ENCODE measurements at regions of chr9 and their contacts with region 1.

Region 1: DNA sequence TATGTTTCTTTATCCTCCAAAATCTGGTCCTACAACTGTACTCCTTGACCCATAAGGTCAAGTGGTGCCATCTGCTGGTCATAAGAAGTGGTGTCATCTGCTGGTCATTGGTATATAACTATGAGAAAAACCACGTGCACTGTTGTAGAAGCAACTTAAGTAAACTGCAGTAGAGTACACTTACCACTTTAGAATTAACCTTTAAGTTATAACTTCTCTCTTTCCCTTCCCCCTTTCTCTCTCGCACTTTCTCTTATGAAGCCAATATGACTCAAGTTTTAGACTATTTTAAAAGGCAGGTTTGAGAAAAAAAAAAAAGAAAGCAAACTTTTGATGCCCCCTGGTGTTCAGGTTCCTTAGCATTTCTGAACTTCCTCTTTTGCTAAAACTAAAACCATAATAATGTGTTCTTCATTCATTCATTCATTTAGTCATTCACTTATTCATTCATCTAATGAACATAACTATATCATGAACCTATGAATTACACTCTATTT is 12.8 kb upstream of the MTAP start:
- DNase-seq: peak; percentile 66 to 67
- H3K4me3 ChIP-seq: peak overlapping the region; percentile 12; the same call in 1 of the 2 replicates
- H3K4me3 Mint-ChIP-seq: peak overlapping the region; percentile 61
- H3K27ac Mint-ChIP-seq: no peak overlapping the region
- H3K4me1 ChIP-seq: peaks cover 18% of the 10 kb centered on the region
- H3K4me1 Mint-ChIP-seq: peaks cover 14% of the 10 kb centered on the region
- H3K27me3 ChIP-seq: no peaks in the 10 kb centered on the region
- H3K27me3 Mint-ChIP-seq: no peaks in the 10 kb centered on the region
- CTCF ChIP-seq: peak; percentile 50 to 59

Region 2: DNA sequence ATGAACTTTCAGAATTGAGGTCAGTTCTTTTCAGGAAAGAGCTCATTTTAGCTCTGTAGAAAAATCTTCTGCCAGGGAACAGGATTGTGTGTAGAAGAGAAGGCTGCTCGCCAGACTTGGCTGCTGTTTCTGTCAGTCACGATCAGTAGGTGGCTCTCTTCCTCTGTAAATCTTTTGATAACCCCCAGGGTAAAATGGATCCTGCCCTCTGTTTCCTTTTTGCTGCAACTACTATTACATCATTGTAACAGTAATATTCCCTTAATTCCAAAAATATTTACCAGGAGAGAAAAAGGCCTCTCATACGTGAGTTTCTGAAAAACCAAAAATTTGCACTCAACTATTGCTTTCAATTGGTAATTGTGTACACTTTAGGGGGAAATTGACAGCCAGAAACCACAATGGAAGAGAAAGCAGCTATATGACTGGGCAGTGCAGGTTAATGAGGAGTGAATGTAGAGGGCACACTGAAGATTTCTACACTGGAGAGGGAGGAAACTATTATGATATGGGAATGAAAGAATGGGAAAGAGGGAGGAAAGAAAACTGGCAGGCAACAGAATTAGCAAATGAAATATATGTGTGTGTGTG is 635.5 kb before region 1 on chr9:
- CTCF ChIA-PET with region 1: no interaction called
- POLR2A ChIA-PET with region 1: no interaction called
- intact Hi-C with region 1: loop called (anchors 1 kb)
- DNase-seq: peak in 1 of 2 experiments; percentile 15
- H3K4me3 ChIP-seq: no peak overlapping the region
- H3K4me3 Mint-ChIP-seq: no peak overlapping the region
- H3K27ac Mint-ChIP-seq: no peak overlapping the region
- H3K4me1 ChIP-seq: no peaks in the 10 kb centered on the region
- H3K4me1 Mint-ChIP-seq: no peaks in the 10 kb centered on the region
- H3K27me3 ChIP-seq: no peaks in the 10 kb centered on the region
- H3K27me3 Mint-ChIP-seq: peaks cover 6% of the 10 kb centered on the region
- CTCF ChIP-seq: peak in 1 of 2 experiments; percentile 22

Region 3: GRCh38 chr9:21252721-21253547 is 536.7 kb before region 1 on chr9:
- CTCF ChIA-PET with region 1: no interaction called
- POLR2A ChIA-PET with region 1: no interaction called
- intact Hi-C with region 1: loop called (anchors 5 kb)
- DNase-seq: peak in 1 of 2 experiments; percentile 4
- H3K4me3 ChIP-seq: no peak overlapping the region
- H3K4me3 Mint-ChIP-seq: no peak overlapping the region
- H3K27ac Mint-ChIP-seq: no peak overlapping the region
- H3K4me1 ChIP-seq: no peaks in the 10 kb centered on the region
- H3K4me1 Mint-ChIP-seq: no peaks in the 10 kb centered on the region
- H3K27me3 ChIP-seq: no peaks in the 10 kb centered on the region
- H3K27me3 Mint-ChIP-seq: peaks cover 7% of the 10 kb centered on the region
- CTCF ChIP-seq: peak; percentile 42 to 43

Region 4: DNA sequence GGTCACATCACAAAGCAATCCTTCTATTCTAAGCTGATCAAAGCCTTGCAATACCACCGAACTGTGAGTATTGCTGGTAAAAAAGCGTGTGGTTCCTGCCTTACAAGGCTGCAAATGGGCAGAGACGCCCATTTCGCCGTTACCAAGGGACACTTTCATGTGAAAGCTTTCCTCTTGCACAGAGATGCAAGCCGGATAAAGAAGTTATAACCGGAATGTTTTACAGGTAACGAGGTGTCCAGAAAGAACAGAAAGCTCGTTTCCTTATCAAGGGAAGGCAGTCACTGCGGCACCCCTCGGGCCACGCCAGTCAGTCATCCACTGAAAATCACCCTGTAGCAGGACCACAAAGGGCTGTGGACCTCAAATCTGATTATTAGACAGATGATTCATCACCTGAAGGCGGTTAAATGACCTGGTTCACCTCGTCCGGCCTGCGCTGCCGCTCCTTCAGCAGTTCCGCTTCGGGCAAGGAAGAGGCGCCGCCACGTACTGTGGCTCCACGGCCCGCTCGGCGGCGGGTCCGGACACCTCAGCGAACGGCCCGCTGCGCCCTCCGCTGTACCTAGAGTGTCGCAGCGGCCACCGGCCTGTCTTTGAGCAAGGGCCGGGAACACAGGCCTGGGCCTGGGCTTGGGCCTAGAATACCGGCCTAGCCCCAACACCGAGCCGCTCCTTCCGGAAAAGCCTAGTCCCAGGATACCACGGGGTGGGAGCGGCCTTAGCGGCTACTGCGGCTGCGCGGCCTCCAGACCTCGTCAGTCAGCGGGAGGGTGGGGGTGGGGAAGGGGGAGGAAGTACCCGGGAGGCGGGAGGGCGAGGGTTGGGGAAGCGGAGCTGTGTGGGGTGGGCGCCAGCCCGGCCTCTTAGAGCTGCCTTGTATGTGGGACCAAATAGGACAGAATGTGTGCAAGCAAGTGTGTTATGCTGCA is 454.6 kb before region 1 on chr9 and contains the start of gene KLHL9:
- CTCF ChIA-PET with region 1: no interaction called
- POLR2A ChIA-PET with region 1: no interaction called
- intact Hi-C with region 1: loop called (anchors 5 kb)
- DNase-seq: peak; percentile 88
- H3K4me3 ChIP-seq: peak within 1 kb of the TSS; percentile 79
- H3K4me3 Mint-ChIP-seq: peak within 1 kb of the TSS; percentile 77
- H3K27ac Mint-ChIP-seq: peak within 1 kb of the TSS; percentile 59
- H3K4me1 ChIP-seq: peaks cover 4% of the 10 kb centered on the region
- H3K4me1 Mint-ChIP-seq: peaks cover 5% of the 10 kb centered on the region
- H3K27me3 ChIP-seq: no peaks in the 10 kb centered on the region
- H3K27me3 Mint-ChIP-seq: peaks cover 4% of the 10 kb centered on the region
- CTCF ChIP-seq: no peak
- total RNA-seq, gene KLHL9: 13.0 and 13.5 TPM in 2 replicates

Region 5: DNA sequence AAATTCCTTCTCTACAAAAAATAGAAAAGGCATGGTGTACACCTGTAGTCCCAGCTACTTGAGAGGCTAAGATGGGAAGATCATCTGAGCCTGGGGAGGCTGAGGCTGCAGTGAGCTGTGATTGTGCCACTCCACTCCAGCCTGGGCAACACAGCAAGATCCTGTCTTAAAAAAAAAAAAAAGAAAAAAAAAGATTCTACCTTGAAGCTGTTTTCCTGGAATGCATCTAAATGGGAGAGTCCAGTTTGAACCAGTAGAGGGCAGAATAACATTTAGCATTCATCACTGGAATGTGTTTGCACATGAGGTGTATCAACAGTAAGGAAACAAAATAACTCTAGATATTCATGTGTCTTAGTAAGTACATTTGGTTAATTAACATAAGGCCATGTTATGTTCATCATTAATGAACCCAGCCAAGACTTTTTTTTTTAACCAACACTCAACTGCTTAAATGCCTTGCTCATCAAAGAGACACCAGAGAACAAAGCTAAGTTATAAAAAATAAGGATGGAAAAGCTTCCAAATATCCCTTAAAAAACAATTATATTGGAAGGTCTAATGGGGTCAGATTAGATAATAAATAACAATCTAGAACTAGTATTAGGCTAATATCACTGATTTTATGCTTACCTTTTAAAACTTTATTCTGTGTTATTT is 323.6 kb before region 1 on chr9:
- CTCF ChIA-PET with region 1: interaction called, 11 read pairs
- POLR2A ChIA-PET with region 1: no interaction called
- intact Hi-C with region 1: loop called (anchors 1 kb)
- DNase-seq: peak in 1 of 2 experiments; percentile 56
- H3K4me3 ChIP-seq: no peak overlapping the region
- H3K4me3 Mint-ChIP-seq: no peak overlapping the region
- H3K27ac Mint-ChIP-seq: no peak overlapping the region
- H3K4me1 ChIP-seq: no peaks in the 10 kb centered on the region
- H3K4me1 Mint-ChIP-seq: no peaks in the 10 kb centered on the region
- H3K27me3 ChIP-seq: no peaks in the 10 kb centered on the region
- H3K27me3 Mint-ChIP-seq: no peaks in the 10 kb centered on the region
- CTCF ChIP-seq: peak; percentile 49 to 54

Region 6: DNA sequence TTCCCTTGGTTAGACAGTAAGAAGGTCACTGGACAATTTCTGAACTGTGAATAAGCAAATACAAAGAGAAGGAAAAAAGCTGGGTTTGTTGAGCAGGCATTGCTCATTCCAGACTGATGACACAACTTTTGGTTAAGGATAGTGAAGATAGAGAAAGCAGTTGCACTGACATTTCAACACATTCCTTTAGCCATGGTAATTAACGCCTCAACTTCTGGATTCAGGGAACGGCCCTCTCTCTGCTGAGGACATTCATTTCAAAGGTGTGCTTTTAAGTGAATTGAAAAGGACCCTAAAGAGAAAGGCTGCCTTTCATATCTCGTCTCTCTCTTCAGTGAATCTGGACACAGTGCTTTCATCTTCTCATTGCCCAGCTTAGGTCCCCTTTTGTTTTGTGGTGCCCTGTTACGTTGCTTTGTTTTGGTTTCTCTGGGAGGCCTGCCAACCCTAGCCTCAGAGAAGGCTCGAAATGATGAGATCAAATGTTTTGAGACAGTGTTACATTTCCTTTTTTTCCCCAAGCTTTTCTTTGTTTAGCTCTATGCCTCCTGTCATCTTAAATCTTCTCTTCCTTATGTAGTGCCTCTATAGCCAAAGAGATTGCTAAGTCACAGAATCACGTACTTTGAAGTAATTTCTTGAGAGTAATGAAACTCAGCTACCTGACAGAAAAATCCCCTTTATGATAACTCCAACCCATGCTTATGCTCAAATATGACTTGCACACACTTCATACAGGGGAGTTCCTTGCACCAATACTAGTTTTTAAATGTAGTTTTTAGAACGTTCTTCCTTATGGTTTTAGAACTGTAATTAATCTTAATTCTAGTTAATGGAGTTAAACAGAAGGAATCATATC is 213.0 kb before region 1 on chr9:
- CTCF ChIA-PET with region 1: no interaction called
- POLR2A ChIA-PET with region 1: no interaction called
- intact Hi-C with region 1: loop called (anchors 5 kb)
- DNase-seq: peak in 1 of 2 experiments; percentile 34
- H3K4me3 ChIP-seq: no peak overlapping the region
- H3K4me3 Mint-ChIP-seq: peak overlapping the region; percentile 69
- H3K27ac Mint-ChIP-seq: peak overlapping the region; percentile 93
- H3K4me1 ChIP-seq: peaks cover 33% of the 10 kb centered on the region
- H3K4me1 Mint-ChIP-seq: peaks cover 16% of the 10 kb centered on the region
- H3K27me3 ChIP-seq: no peaks in the 10 kb centered on the region
- H3K27me3 Mint-ChIP-seq: no peaks in the 10 kb centered on the region
- CTCF ChIP-seq: no peak

Measured in Caco-2 (cell line).